Ascending aorta (tissue), 2 donors: ENCODE measurements at regions of chr19 and their contacts with region 1.

Region 1: DNA sequence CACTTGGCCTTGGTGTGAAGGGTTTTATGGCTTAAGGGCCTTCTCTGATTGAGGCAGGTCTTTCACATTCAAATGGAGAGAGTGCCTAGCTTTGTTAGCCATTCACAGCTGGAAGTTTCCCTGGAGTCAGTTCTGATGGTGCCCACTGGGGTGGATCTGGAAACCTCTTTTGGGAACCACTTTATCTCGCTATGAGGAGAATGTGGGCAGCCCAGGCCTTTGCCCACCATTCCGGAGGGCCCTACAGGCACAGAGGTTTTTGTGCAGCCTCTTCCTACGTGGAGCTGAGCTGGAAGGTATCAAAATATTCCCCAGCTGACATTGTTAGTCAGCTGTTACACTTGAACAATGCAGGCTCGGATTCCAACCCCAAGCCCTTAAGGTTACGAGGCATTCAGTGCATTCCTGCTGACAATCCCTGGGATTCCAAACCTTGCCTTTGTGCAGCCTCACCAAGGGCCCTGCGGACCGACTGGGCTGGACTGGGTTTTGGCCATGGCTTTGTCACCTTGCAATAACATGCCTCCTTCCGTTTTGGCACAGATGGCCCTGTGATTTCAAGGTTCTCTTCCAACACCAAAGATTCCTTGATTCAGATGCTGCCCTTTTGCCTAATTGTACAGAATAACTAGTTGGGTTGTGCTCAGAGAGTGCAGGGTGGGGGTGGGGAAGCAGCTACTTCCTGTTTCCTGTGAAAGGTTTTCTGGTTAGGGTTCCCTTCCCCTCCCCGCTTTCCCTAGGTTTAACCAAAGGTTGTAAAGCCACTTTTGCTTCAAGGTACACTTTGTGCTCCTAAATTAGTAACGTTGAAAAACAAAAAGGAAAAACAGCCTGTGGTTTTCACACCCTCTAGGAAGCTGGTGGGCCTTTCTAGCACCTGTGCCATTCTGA is 27.0 kb downstream of the SAE1 start:
- DNase-seq: peak in 1 of 2 donors; percentile 73
- H3K4me3 ChIP-seq: peak overlapping the region in 1 of 2 donors; percentile 7
- H3K27ac ChIP-seq: peak overlapping the region; percentile 74 to 83
- H3K4me1 ChIP-seq: peaks cover 18 to 33% of the 10 kb centered on the region in 2 donors
- H3K27me3 ChIP-seq: no peaks in the 10 kb centered on the region
- CTCF ChIP-seq: no peak

Region 2: GRCh38 chr19:47124937-47125668 is 32.6 kb before region 1 on chr19:
- intact Hi-C with region 1: no loop called
- DNase-seq: no peak
- H3K4me3 ChIP-seq: no peak overlapping the region
- H3K27ac ChIP-seq: no peak overlapping the region
- H3K4me1 ChIP-seq: peaks cover 0 to 8% of the 10 kb centered on the region in 2 donors
- H3K27me3 ChIP-seq: no peaks in the 10 kb centered on the region
- CTCF ChIP-seq: peak; percentile 69 to 79 (median 79)

Region 3: GRCh38 chr19:47176627-47177090 is 19.0 kb after region 1 on chr19:
- intact Hi-C with region 1: loop called (anchors 2 kb)
- DNase-seq: peak in 1 of 2 donors; percentile 77
- H3K4me3 ChIP-seq: no peak overlapping the region
- H3K27ac ChIP-seq: peak overlapping the region; percentile 80 to 82
- H3K4me1 ChIP-seq: peaks cover 10 to 26% of the 10 kb centered on the region in 2 donors
- H3K27me3 ChIP-seq: no peaks in the 10 kb centered on the region
- CTCF ChIP-seq: no peak

Region 4: GRCh38 chr19:47190167-47190727 is 32.6 kb after region 1 on chr19:
- intact Hi-C with region 1: loop called (anchors 5 kb)
- DNase-seq: peak; percentile 29 to 84
- H3K4me3 ChIP-seq: peak overlapping the region in 1 of 2 donors; percentile 16
- H3K27ac ChIP-seq: peak overlapping the region; percentile 60 to 80
- H3K4me1 ChIP-seq: peaks cover 0 to 24% of the 10 kb centered on the region in 2 donors
- H3K27me3 ChIP-seq: no peaks in the 10 kb centered on the region
- CTCF ChIP-seq: no peak